Activated B cell treated with CpG ODN at 0.5 μM for 24 hours (primary cell): ENCODE measurements at regions of chr3 and their contacts with region 1.

Region 1: DNA sequence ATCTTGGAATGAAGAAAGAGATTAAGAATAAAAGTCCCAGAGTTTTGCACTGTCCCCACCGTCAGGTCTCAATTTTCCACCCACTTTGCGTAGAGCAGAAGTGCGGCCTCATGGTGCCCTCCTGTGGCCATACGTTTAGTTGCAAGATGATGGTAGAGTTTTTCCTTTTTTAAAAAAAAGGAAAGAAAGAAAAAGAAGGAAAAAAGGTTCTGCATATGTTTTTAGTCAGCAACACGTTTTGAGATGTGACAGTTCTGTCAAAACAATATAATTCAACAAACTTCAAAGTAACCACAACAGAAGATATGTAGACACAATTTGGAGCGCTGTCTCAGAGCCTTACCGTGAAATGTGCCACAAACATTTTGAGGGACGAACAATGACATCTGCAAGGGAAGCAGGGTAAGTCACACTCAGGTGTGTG is 24.6 kb downstream of the EBLN2 start:
- DNase-seq: no peak
- ATAC-seq: peak; percentile 49
- H3K4me3 Mint-ChIP-seq: no peak overlapping the region
- H3K27ac Mint-ChIP-seq: no peak overlapping the region
- H3K4me1 Mint-ChIP-seq: no peaks in the 10 kb centered on the region
- H3K27me3 Mint-ChIP-seq: no peaks in the 10 kb centered on the region
- CTCF ChIP-seq: peak; percentile 85

Region 2: GRCh38 chr3:71710906-71711494 is 1375.1 kb before region 1 on chr3:
- CTCF ChIA-PET with region 1: interaction called, 11 read pairs
- POLR2A ChIA-PET with region 1: no interaction called
- intact Hi-C with region 1: loop called (anchors 1 kb)
- DNase-seq: no peak
- ATAC-seq: peak; percentile 52
- H3K4me3 Mint-ChIP-seq: no peak overlapping the region
- H3K27ac Mint-ChIP-seq: no peak overlapping the region
- H3K4me1 Mint-ChIP-seq: no peaks in the 10 kb centered on the region
- H3K27me3 Mint-ChIP-seq: no peaks in the 10 kb centered on the region
- CTCF ChIP-seq: no peak

Region 3: GRCh38 chr3:71725279-71725991 is 1360.6 kb before region 1 on chr3 and contains the start of gene EIF4E3:
- CTCF ChIA-PET with region 1: no interaction called
- POLR2A ChIA-PET with region 1: no interaction called
- intact Hi-C with region 1: loop called (anchors 1 kb)
- DNase-seq: peak; percentile 53
- ATAC-seq: peak; percentile 72
- H3K4me3 Mint-ChIP-seq: peak within 1 kb of the TSS; percentile 86
- H3K27ac Mint-ChIP-seq: peak within 1 kb of the TSS; percentile 41
- H3K4me1 Mint-ChIP-seq: peaks cover 37% of the 10 kb centered on the region
- H3K27me3 Mint-ChIP-seq: peaks cover 17% of the 10 kb centered on the region
- CTCF ChIP-seq: no peak
- total RNA-seq, gene EIF4E3: 1.8 and 2.0 TPM in 2 replicates

Region 4: DNA sequence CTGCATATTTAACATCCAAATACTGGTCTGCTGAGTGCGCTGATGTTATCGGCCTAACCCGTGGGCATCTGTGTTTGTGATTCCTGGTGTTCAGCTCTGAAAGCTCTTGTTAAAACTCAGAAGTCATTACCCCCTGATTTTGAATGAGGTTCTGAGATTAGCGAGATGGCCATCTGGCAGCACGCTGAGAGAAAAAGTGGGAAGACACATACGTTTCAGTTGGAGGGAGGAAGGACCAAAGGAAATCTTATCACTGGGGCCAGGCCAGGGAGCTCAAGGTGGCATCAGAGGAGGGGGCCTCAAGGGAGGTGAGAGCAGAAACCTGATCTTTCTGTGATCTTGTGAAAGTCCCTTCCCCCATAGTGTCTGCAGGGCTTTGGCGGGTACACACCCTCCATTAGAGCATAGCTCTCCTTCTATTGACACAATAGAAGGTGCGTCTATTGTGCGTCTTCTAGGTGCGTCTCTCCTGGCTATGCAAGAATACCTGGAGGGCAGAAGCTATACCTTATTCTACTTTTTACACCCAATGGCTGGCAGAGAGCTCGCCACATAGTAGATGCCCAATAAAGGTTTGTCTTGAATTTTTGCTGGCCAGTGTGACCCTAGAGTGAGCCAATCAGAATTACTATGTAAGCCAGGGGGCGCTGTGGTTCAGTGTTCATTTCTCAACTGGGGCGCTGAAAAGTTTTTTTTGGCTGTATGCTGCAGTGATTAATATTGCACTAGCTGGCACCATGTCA is 420.2 kb before region 1 on chr3:
- CTCF ChIA-PET with region 1: interaction called, 3 read pairs
- POLR2A ChIA-PET with region 1: no interaction called
- intact Hi-C with region 1: loop called (anchors 10 kb)
- DNase-seq: no peak
- ATAC-seq: peak; percentile 50
- H3K4me3 Mint-ChIP-seq: no peak overlapping the region
- H3K27ac Mint-ChIP-seq: no peak overlapping the region
- H3K4me1 Mint-ChIP-seq: no peaks in the 10 kb centered on the region
- H3K27me3 Mint-ChIP-seq: peaks cover 6% of the 10 kb centered on the region
- CTCF ChIP-seq: no peak

Region 5: GRCh38 chr3:72847751-72848702 is 238.1 kb before region 1 on chr3 and contains the start of gene SHQ1:
- CTCF ChIA-PET with region 1: interaction called, 8 read pairs
- POLR2A ChIA-PET with region 1: no interaction called
- intact Hi-C with region 1: loop called (anchors 1 kb)
- DNase-seq: peak; percentile 84
- ATAC-seq: peak; percentile 95
- H3K4me3 Mint-ChIP-seq: peak within 1 kb of the TSS; percentile 92
- H3K27ac Mint-ChIP-seq: peak within 1 kb of the TSS; percentile 79
- H3K4me1 Mint-ChIP-seq: peaks cover 45% of the 10 kb centered on the region
- H3K27me3 Mint-ChIP-seq: no peaks in the 10 kb centered on the region
- CTCF ChIP-seq: no peak
- total RNA-seq, gene SHQ1: 21.2 and 25.3 TPM in 2 replicates

Region 6: GRCh38 chr3:72938471-72939265 is 147.4 kb before region 1 on chr3:
- CTCF ChIA-PET with region 1: interaction called, 12 read pairs
- POLR2A ChIA-PET with region 1: no interaction called
- intact Hi-C with region 1: loop called (anchors 1 kb)
- DNase-seq: no peak
- ATAC-seq: peak; percentile 81
- H3K4me3 Mint-ChIP-seq: no peak overlapping the region
- H3K27ac Mint-ChIP-seq: no peak overlapping the region
- H3K4me1 Mint-ChIP-seq: no peaks in the 10 kb centered on the region
- H3K27me3 Mint-ChIP-seq: peaks cover 4% of the 10 kb centered on the region
- CTCF ChIP-seq: no peak